B cell (primary cell): ENCODE measurements at regions of chr2 and their contacts with region 1.

Region 1: DNA sequence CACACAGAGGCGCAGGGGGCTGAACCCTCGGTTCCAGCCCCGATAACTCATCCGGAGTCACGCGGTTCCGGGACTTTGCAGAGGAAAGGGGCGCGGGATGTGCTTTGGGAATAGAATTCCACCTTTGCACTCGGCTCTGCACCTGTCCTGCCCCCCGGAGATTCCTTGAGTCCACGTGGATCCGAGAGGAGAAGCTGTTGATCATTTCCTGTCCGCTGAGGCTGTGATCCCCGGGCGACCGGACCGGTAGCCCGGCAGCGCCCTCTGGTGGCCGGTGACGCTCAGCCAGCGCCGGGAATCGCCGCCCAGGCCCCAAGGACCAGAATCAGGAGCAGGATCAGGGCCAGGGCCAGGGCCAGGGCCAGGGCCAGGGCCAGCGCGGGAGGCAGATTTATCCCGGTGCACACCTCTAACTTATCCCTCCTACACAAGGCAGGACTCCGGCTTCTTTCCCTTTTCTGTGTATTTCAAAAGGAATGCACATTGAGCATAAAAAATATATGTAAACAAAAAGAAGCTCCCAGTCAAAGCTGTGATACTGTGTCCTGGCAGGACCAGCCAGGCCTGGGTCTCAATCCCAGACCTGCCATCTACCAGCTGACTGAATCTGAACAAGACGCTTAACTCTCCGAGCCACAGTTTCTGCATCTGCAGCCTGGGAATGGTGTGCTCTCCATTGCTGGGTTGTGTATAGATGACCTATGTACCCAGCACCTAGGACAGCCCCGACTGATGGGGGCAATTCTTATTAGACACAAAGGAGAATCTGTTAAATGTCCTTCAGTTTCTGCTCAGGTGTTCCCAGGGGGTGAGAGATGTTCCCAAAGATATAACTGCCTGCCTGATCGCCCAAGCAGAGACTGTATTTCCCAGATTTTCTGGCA is 8.5 kb upstream of the SPATA3 start:
- DNase-seq: peak; percentile 80
- ATAC-seq: peak; percentile 72
- H3K4me3 ChIP-seq: peak overlapping the region; percentile 2 to 59 (median 50)
- H3K4me3 Mint-ChIP-seq: peak overlapping the region; percentile 78
- H3K27ac ChIP-seq: no peak overlapping the region
- H3K27ac Mint-ChIP-seq: no peak overlapping the region
- H3K4me1 ChIP-seq: peaks cover 6 to 8% of the 10 kb centered on the region in 2 donors
- H3K4me1 Mint-ChIP-seq: peaks cover 6% of the 10 kb centered on the region
- H3K27me3 ChIP-seq: peaks cover 0 to 20% (median 2%) of the 10 kb centered on the region in 4 experiments
- H3K27me3 Mint-ChIP-seq: peaks cover 11% of the 10 kb centered on the region
- CTCF ChIP-seq: peak; percentile 96

Region 2: GRCh38 chr2:230824406-230824978 is 162.9 kb before region 1 on chr2:
- CTCF ChIA-PET with region 1: interaction called, 200 read pairs
- POLR2A ChIA-PET with region 1: no interaction called
- intact Hi-C with region 1: loop called (anchors 1 kb)
- DNase-seq: peak; percentile 86
- ATAC-seq: peak; percentile 75
- H3K4me3 ChIP-seq: no peak overlapping the region
- H3K4me3 Mint-ChIP-seq: peak overlapping the region; percentile 37
- H3K27ac ChIP-seq: no peak overlapping the region
- H3K27ac Mint-ChIP-seq: no peak overlapping the region
- H3K4me1 ChIP-seq: peaks cover 14 to 16% of the 10 kb centered on the region in 2 donors
- H3K4me1 Mint-ChIP-seq: peaks cover 5% of the 10 kb centered on the region
- H3K27me3 ChIP-seq: peaks cover 0 to 33% (median 20%) of the 10 kb centered on the region in 4 experiments
- H3K27me3 Mint-ChIP-seq: peaks cover 29% of the 10 kb centered on the region
- CTCF ChIP-seq: peak; percentile 83

Region 3: GRCh38 chr2:230847883-230848388 is 139.4 kb before region 1 on chr2:
- CTCF ChIA-PET with region 1: interaction called, 93 read pairs
- POLR2A ChIA-PET with region 1: no interaction called
- intact Hi-C with region 1: loop called (anchors 1 kb)
- DNase-seq: peak; percentile 88
- ATAC-seq: peak; percentile 91
- H3K4me3 ChIP-seq: peak overlapping the region in 1 of 5 experiments; percentile 8
- H3K4me3 Mint-ChIP-seq: no peak overlapping the region
- H3K27ac ChIP-seq: no peak overlapping the region
- H3K27ac Mint-ChIP-seq: no peak overlapping the region
- H3K4me1 ChIP-seq: peaks cover 5 to 7% of the 10 kb centered on the region in 2 donors
- H3K4me1 Mint-ChIP-seq: peaks cover 6% of the 10 kb centered on the region
- H3K27me3 ChIP-seq: peaks cover 0 to 2% (median 0%) of the 10 kb centered on the region in 4 experiments
- H3K27me3 Mint-ChIP-seq: peaks cover 37% of the 10 kb centered on the region
- CTCF ChIP-seq: peak; percentile 95

Region 4: GRCh38 chr2:230913406-230914143 is 73.8 kb before region 1 on chr2:
- CTCF ChIA-PET with region 1: interaction called, 15 read pairs
- POLR2A ChIA-PET with region 1: no interaction called
- intact Hi-C with region 1: no loop called
- DNase-seq: peak; percentile 82
- ATAC-seq: peak; percentile 87
- H3K4me3 ChIP-seq: no peak overlapping the region
- H3K4me3 Mint-ChIP-seq: no peak overlapping the region
- H3K27ac ChIP-seq: no peak overlapping the region
- H3K27ac Mint-ChIP-seq: no peak overlapping the region
- H3K4me1 ChIP-seq: peaks cover 0 to 10% of the 10 kb centered on the region in 2 donors
- H3K4me1 Mint-ChIP-seq: peaks cover 16% of the 10 kb centered on the region
- H3K27me3 ChIP-seq: no peaks in the 10 kb centered on the region
- H3K27me3 Mint-ChIP-seq: no peaks in the 10 kb centered on the region
- CTCF ChIP-seq: peak; percentile 80

Region 5: DNA sequence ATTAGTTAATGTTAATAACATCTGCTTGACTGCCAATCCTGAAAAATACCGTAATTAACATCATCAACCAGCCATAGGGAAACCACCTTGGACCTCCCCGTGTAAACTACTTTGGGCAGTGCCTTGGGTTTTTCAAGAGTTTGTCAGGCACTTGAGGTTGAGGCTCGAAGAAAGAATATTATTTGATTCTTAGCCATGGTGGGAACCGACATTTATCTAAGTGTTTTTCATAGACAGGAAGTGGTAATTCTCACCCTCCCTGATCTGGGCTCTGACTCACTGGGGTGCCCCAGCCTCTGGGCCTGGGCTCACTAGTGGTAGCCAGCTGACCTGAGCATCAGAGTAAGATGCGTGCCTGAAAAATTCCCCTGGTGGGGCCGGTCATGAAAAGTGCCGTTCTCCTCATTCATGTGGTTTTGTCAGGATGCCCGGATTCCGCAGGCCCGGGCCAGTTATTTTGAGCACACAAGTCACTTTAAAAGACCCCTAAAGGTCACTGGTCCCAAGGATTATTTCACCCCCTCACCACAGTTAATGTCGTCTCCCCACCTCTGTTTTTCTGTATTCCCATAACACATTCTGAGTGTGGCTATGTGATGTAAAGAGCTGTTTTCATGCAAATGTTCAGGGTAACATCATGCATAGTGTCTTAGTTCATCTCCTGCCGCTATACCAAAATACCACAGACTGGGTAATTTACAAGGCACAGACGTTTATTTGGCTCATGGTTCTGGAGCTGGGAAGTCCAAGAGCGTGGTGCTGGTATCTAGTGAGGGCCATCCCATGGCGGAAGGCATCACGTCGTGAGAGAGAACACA is 13.1 kb before region 1 on chr2:
- CTCF ChIA-PET with region 1: interaction called, 10 read pairs
- POLR2A ChIA-PET with region 1: no interaction called
- intact Hi-C with region 1: no loop called
- DNase-seq: peak; percentile 59
- ATAC-seq: peak; percentile 88
- H3K4me3 ChIP-seq: no peak overlapping the region
- H3K4me3 Mint-ChIP-seq: peak overlapping the region; percentile 64
- H3K27ac ChIP-seq: peak overlapping the region; percentile 4 to 51
- H3K27ac Mint-ChIP-seq: peak overlapping the region; percentile 86
- H3K4me1 ChIP-seq: peaks cover 10 to 17% of the 10 kb centered on the region in 2 donors
- H3K4me1 Mint-ChIP-seq: peaks cover 33% of the 10 kb centered on the region
- H3K27me3 ChIP-seq: peaks cover 0 to 3% (median 0%) of the 10 kb centered on the region in 4 experiments
- H3K27me3 Mint-ChIP-seq: peaks cover 18% of the 10 kb centered on the region
- CTCF ChIP-seq: no peak